ENCODE measurements at regions of chr9 and their contacts with region 1.

Region 1: DNA sequence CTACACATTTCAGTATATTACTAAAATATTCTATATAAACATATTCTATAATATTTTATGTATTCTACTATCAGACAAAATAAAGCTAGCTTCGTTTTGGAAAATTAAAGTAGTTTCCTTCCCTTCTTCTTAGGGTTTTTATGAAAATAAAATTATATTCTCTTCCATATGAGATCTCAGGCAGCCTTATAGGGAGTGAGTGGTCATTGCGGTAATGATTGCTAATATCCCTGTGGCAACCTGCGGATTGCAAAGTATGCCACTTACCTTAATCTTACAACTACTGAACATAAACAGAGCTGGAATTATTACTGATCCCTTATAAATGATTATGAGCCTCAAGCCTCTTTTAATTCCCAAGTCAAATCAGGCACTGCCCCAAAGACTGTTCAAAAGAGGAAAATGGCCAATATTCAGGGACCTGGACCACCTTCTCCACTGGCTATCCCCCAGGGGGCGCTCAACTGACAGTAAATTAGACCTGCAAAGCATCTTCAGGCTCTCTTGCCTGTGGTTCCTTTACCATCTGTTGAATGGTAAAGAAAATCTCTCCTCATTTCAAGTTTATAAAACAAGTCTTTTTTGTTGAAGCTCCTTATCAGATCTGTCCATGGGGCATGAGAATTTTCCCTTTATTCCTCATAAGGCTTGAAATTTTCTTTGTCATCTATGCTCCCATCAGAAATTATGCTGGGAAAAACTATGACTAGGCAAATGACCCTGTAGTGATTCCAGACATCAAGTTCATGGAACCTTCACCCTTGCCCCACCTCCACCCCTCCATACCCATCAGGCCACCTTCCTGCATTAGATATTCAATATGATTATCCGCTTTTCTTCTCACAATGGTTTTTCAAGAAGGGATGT is 163.9 kb downstream of the CEMIP2 start:
- DNase-seq: peak; percentile 10
- H3K4me3 ChIP-seq: no peak overlapping the region
- CTCF ChIP-seq: peak; percentile 81

Region 2: GRCh38 chr9:71614409-71615010 is 10.1 kb after region 1 on chr9:
- CTCF ChIA-PET with region 1: interaction called, 36 read pairs
- POLR2A ChIA-PET with region 1: no interaction called
- DNase-seq: no peak
- H3K4me3 ChIP-seq: no peak overlapping the region
- CTCF ChIP-seq: no peak

Region 3: DNA sequence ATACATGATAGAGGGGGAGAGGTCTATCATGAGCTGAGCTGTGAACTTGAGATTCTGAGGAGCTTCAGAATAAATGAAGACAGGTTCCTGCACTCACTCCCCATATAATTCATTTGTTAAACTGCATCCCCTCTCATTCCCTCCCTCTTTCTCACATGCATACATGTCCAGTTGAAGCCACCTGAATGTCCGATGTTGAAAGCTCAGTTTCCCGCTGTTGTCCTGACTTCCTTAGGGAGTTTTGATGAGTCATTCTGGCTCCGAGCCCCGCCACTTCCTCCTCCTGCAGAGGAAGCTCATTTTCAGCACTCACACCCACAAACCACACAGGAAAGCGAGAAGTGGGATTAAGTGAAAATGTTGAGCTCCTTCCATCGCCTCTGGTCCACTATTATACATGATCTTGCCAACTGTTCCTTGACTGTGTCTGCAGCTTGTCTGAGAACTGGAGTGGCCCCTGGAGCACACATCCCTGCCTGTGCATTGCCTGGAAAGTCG is 42.7 kb after region 1 on chr9:
- CTCF ChIA-PET with region 1: interaction called, 12 read pairs
- POLR2A ChIA-PET with region 1: no interaction called
- DNase-seq: no peak
- H3K4me3 ChIP-seq: no peak overlapping the region
- CTCF ChIP-seq: no peak

Region 4: DNA sequence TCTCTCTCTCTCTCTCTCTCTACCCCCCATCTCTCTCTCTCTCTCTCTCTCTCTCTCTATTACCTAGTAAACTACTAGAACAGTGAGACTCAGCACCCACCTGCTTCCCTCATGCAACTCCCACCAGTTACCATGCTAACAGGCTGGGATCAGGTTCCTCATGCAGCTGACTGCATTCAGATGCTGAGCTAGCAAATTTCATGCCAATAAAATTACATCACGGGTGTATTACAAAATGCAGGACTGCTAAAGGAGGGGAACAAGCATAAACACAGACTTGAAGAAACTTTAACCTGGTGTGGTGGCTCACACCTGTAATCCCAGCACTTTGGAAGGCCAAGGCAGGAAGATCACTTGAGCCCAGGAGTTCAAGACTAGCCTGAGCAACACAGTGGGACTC is 87.9 kb after region 1 on chr9:
- CTCF ChIA-PET with region 1: interaction called, 12 read pairs
- POLR2A ChIA-PET with region 1: no interaction called
- DNase-seq: no peak
- H3K4me3 ChIP-seq: no peak overlapping the region
- CTCF ChIP-seq: no peak

Region 5: DNA sequence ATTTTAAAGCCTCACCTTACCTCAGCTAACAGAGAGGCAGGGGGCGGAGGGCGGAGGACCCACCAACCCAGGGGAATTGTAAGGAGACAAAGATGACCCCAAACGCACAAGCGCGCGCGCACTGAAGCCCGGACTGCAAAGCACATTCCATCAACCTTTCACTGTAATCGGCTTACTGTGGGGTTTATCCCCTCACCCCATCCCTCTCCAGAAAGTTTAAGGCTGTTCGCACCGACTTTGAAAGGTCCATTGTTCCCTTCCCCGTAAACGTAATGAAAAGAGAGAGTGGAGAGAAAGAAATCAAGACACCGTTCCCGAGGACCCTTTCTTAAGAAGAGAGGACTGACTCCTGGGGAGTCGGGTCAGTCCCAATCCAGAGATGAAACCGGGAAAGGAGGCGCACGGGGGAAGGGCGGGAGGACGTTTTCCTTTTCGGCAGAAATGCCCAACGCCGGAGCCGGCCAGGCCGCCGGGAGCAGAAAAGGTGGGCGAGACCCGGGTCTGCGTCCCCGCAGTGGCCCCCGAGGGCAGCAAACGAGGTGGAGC is 163.4 kb after region 1 on chr9:
- CTCF ChIA-PET with region 1: interaction called, 15 read pairs
- POLR2A ChIA-PET with region 1: no interaction called
- DNase-seq: no peak
- H3K4me3 ChIP-seq: peak overlapping the region; percentile 89
- CTCF ChIP-seq: no peak

Region 6: DNA sequence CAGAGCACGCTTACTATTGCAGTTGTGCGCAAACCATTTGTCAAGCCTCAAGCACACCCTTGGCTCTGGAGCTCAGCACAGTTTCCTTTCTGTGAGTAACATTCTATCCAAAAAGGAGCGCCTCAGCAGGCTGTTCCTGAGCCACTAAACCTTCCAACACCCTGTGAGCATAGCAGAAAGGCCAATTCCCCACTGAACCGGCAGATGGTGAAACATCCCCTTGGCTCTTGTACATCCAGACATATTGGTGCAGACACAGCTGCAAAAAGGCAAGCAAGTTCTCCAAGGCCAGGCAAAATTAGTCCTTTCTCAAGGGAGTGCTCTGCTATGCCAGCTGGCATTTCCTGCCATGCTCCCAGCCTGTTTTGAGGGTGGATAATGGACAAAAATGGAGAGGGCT is 208.0 kb after region 1 on chr9:
- CTCF ChIA-PET with region 1: interaction called, 15 read pairs
- POLR2A ChIA-PET with region 1: no interaction called
- DNase-seq: no peak
- H3K4me3 ChIP-seq: no peak overlapping the region
- CTCF ChIP-seq: peak; percentile 6

Measured in AG04449 (cell line).